ENCODE measurements at regions of chr14 and their contacts with region 1.

Region 1: DNA sequence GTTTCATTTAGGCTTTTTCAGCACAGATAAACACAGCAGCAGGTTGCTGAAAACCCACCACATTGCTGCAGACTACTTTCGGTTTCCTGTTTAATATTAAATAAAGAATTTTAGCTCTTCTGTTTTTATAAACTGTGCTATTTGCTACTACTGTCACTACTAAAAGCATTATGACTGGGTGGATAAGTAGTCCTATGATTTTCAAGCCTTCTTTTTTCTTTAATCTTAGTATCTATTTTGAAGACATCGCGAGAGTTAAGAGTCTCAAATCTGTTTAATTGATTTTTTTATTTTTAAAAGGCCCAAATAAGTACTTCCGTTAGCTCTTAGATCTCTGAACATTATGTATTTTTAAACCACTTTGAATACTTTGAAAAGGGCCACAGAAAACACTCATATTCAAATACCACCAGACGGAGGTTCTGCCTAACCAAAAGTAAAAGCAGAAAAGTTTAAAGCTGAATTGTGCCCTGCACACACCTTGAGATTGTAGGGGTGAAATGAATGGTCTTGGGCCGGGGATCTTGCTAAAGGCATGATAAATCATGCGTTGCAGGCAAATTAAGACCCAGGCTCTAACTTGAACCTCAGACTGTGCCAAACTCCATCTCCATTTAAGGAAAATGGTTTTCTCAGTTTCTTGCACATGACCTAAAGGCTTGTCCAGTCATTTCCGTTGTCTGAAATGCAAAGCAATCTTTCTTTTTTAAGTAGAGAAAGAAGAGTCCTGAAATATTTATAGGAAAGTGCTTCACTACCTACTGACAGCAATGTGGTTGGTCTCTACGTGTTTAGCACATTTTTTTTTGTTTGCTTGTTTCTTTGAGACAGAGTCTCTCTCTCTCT is 13.6 kb upstream of the FOXN3 start:
- DNase-seq: peak; percentile 84
- CTCF ChIP-seq: no peak

Region 2: DNA sequence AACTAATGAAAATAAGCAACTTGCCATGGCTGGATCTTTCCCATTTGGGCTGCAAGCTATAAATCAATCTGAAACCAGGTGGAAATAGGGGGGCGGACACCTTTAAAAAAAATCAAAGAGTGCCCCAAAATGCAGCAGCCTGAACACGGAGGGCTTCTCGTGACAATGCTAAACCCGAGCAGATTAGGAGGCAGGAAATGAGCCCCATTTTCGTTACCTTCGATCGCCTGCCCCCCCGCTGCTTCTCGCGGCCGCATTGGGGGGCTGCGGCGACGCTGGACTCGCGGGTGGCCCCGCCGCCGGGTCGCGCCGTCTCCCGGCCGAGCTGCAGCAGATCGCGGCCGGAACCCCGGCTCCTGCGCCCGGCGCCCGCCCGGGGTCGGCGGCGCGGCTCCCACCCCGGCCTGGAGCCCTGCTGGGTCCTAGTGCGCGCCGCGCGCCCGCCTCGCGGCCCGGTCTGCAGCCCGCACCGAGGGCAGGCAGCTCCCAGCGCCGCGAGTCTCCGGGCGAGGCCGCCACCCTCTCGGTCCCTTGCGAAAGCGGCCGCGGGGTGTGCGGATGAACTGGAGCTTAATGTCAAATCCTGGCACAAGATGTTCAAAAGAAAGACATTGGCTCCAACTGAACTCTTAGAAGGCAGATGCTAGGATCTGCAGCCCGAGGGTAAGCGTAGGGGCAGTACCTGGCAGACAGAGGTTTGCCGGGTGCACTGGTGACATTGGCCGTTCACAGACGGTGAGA is 188.4 kb after region 1 on chr14:
- in situ Hi-C with region 1: loop called (anchors 10 kb)
- DNase-seq: peak; percentile 84
- CTCF ChIP-seq: no peak

Region 3: DNA sequence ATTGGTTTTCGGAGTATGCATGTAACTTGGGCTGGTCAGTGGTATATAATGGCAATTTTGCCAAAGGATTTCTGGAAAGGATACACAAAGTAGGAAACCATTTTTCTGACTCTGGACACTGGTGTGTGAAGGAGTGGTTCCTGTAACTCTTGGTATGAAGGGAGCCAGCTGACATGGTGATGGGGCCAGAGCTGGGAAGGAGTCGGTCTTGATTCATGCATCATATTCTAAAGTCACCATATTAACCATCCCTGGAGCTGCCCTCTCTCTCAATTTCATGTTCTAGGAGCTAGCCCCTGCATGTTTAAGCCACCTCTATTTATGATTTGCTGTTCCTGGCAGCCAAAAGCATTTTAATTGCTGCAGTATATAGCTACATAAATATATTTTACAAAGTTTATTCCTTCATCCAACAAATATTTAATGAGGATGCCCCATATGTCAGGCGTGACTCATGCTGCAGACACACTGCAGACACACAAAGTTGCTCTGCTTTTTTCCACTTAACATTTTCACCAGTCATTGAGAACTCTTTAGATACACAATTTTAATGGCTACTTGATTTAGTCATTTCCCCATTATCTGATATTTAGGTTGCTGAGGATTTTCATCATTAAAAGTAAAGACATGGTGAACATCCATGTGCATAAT is 747.0 kb after region 1 on chr14:
- in situ Hi-C with region 1: no loop called
- DNase-seq: no peak
- CTCF ChIP-seq: no peak

Measured in GM13976 (cell line).